Gastrocnemius medialis (tissue), 4 donors: ENCODE measurements at regions of chr1 and their contacts with region 1.

Region 1: GRCh38 chr1:27772933-27773825 is at the start of gene STX12:
- DNase-seq: peak; percentile 93 to 97
- ATAC-seq: peak; percentile 95
- H3K4me3 ChIP-seq: peak within 1 kb of the TSS; percentile 86 to 95 (median 88)
- H3K27ac ChIP-seq: peak within 1 kb of the TSS; percentile 83 to 94 (median 91)
- H3K4me1 ChIP-seq: peaks cover 10 to 18% of the 10 kb centered on the region in 2 donors
- H3K27me3 ChIP-seq: no peaks in the 10 kb centered on the region
- CTCF ChIP-seq: no peak
- POLR2A ChIP-seq: peak; percentile 87 to 91
- total RNA-seq, gene STX12: 19.2 to 71.6 (median 31.2) TPM

Region 2: DNA sequence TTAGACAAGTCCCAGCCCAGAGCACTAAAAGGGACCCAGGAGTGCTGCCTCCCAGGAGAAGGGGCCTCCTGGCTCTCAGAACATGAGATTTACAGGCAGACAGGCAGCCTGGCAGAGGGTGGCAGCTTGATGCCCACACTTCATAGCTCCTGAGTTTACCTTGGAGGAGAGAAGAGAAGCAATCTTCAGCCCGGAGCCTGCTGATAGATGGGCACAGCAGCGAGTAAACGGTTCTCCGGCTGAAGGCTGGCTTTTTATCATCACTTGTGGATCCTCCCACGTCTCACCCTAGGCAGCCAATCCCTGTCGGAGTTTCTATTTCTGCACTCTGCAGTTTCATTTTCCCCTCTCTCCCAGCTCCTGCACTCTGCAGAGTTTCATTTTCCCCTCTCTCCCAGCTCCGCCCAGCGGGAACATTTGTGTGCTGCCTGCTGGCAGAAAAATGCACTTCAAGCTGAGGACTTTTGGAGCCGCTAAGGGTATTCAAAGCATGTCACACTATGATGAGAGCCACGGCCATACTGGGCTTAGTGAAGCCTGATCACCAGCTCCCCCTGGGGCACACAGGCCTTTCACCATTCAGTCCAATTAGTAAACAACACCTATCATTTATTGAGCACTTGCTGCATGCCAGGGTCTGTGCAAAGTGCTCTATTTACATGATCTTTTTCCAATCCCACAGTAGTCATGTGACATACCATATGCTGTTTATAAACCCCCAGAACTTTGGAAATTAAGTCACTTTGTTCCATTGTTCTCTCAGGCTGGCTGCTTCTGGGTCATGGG is 101.0 kb before region 1 on chr1 and contains the start of gene IFI6:
- in situ Hi-C with region 1: no loop called
- intact Hi-C with region 1: loop called (anchors 5 kb)
- DNase-seq: peak; percentile 68 to 80
- ATAC-seq: peak; percentile 96 to 98
- H3K4me3 ChIP-seq: peak within 1 kb of the TSS; percentile 52 to 72 (median 65)
- H3K27ac ChIP-seq: peak within 1 kb of the TSS; percentile 72 to 83 (median 80)
- H3K4me1 ChIP-seq: peaks cover 16 to 27% of the 10 kb centered on the region in 2 donors
- H3K27me3 ChIP-seq: no peaks in the 10 kb centered on the region
- CTCF ChIP-seq: peak in 4 of 5 experiments; percentile 21 to 52 (median 36)
- POLR2A ChIP-seq: peak; percentile 33 to 73
- total RNA-seq, gene IFI6: 7.7 to 25.1 (median 14.5) TPM

Region 3: DNA sequence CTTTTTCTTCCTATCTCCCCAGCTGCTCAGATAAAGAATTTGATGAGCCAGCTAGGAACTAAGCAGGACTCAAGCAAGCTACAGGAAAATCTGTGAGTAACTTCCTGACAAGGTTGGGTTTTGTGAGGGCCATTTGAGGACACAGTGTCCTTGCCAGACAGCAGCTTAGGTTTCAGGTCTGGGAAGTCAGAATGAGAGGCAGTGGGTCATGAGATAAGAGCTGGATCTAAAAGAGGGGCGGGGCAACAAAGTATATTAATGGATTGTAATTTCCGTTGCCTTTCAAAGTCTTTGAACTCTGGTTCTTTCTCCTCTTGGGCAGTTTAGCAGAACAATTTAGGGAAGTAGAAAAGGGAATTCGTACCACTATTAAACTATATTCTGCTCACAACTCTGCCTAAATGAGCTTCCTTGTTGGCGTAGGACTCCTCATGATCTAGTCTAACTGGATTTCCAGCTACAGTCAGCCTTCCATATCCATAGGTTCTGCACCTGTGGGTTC is 16.4 kb after region 1 on chr1:
- in situ Hi-C with region 1: no loop called
- intact Hi-C with region 1: loop called (anchors 2 kb)
- DNase-seq: peak; percentile 73 to 85
- ATAC-seq: peak; percentile 100
- H3K4me3 ChIP-seq: no peak overlapping the region
- H3K27ac ChIP-seq: peak overlapping the region; percentile 49 to 82 (median 75)
- H3K4me1 ChIP-seq: peaks cover 23 to 52% of the 10 kb centered on the region in 2 donors
- H3K27me3 ChIP-seq: no peaks in the 10 kb centered on the region
- CTCF ChIP-seq: no peak
- POLR2A ChIP-seq: no peak

Region 4: GRCh38 chr1:27830621-27831424 is 57.6 kb after region 1 on chr1 and contains the start of gene PPP1R8:
- in situ Hi-C with region 1: no loop called
- intact Hi-C with region 1: loop called (anchors 5 kb)
- DNase-seq: peak; percentile 87 to 91
- ATAC-seq: peak; percentile 98 to 99
- H3K4me3 ChIP-seq: peak within 1 kb of the TSS; percentile 86 to 95 (median 91)
- H3K27ac ChIP-seq: peak within 1 kb of the TSS; percentile 86 to 92 (median 87)
- H3K4me1 ChIP-seq: peaks cover 20 to 36% of the 10 kb centered on the region in 2 donors
- H3K27me3 ChIP-seq: no peaks in the 10 kb centered on the region
- CTCF ChIP-seq: no peak
- POLR2A ChIP-seq: peak; percentile 75 to 80
- total RNA-seq, gene PPP1R8: 18.0 to 27.3 (median 25.0) TPM